ENCODE measurements at regions of chr5 and their contacts with region 1.

Region 1: DNA sequence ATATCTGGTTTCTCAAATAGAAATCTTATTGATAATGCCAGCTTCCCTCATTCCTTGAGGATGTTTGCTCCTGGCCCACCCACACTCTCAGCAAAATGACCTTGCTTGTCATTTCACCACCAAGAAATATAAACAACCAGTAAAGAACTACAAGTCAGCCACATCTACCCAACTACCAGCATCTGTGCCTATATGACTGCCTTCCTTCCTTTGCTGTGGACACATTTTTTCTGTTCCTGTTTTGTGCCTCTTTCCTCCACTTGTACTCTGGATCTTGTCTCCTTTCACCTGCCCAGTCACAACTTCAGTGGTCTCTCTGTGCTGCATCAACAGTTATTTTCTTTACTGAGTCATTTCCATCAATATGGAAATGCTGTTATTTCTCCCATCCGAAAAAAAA is 20.3 kb downstream of the KIF2A start:
- DNase-seq: no peak
- H3K4me3 ChIP-seq: no peak overlapping the region
- H3K4me3 Mint-ChIP-seq: peak overlapping the region in 4 of 8 donors; percentile 14 to 52 (median 42)
- H3K27ac ChIP-seq: no peak overlapping the region
- H3K27ac Mint-ChIP-seq: peak overlapping the region; percentile 31 to 81 (median 69)
- H3K4me1 ChIP-seq: peaks cover 57% of the 10 kb centered on the region
- H3K4me1 Mint-ChIP-seq: peaks cover 55 to 83% (median 70%) of the 10 kb centered on the region in 4 donors
- H3K27me3 ChIP-seq: no peaks in the 10 kb centered on the region
- H3K27me3 Mint-ChIP-seq: no peaks in the 10 kb centered on the region

Region 2: GRCh38 chr5:62059960-62060359 is 266.3 kb before region 1 on chr5:
- CTCF ChIA-PET with region 1: no interaction called
- POLR2A ChIA-PET with region 1: no interaction called
- intact Hi-C with region 1: no loop called
- DNase-seq: no peak
- H3K4me3 ChIP-seq: no peak overlapping the region
- H3K4me3 Mint-ChIP-seq: no peak overlapping the region
- H3K27ac ChIP-seq: no peak overlapping the region
- H3K27ac Mint-ChIP-seq: no peak overlapping the region
- H3K4me1 ChIP-seq: no peaks in the 10 kb centered on the region
- H3K4me1 Mint-ChIP-seq: no peaks in the 10 kb centered on the region
- H3K27me3 ChIP-seq: no peaks in the 10 kb centered on the region
- H3K27me3 Mint-ChIP-seq: peaks cover 0 to 5% of the 10 kb centered on the region in 2 donors

Region 3: GRCh38 chr5:62268234-62268633 is 58.1 kb before region 1 on chr5:
- CTCF ChIA-PET with region 1: no interaction called
- POLR2A ChIA-PET with region 1: no interaction called
- intact Hi-C with region 1: no loop called
- DNase-seq: no peak
- H3K4me3 ChIP-seq: no peak overlapping the region
- H3K4me3 Mint-ChIP-seq: peak overlapping the region in 2 of 8 donors; percentile 11 to 42
- H3K27ac ChIP-seq: no peak overlapping the region
- H3K27ac Mint-ChIP-seq: peak overlapping the region in 4 of 7 donors; percentile 5 to 84 (median 40)
- H3K4me1 ChIP-seq: peaks cover 11% of the 10 kb centered on the region
- H3K4me1 Mint-ChIP-seq: peaks cover 7 to 12% (median 10%) of the 10 kb centered on the region in 4 donors
- H3K27me3 ChIP-seq: no peaks in the 10 kb centered on the region
- H3K27me3 Mint-ChIP-seq: no peaks in the 10 kb centered on the region

Region 4: GRCh38 chr5:62315376-62316175 is 10.7 kb before region 1 on chr5:
- CTCF ChIA-PET with region 1: interaction called, 6 read pairs
- POLR2A ChIA-PET with region 1: no interaction called
- intact Hi-C with region 1: loop called (anchors 2 kb)
- DNase-seq: no peak
- H3K4me3 ChIP-seq: no peak overlapping the region
- H3K4me3 Mint-ChIP-seq: peak overlapping the region; percentile 2 to 62 (median 16)
- H3K27ac ChIP-seq: no peak overlapping the region
- H3K27ac Mint-ChIP-seq: peak overlapping the region; percentile 7 to 92 (median 31)
- H3K4me1 ChIP-seq: peaks cover 98% of the 10 kb centered on the region
- H3K4me1 Mint-ChIP-seq: peaks cover 65 to 94% (median 81%) of the 10 kb centered on the region in 4 donors
- H3K27me3 ChIP-seq: no peaks in the 10 kb centered on the region
- H3K27me3 Mint-ChIP-seq: no peaks in the 10 kb centered on the region

Region 5: DNA sequence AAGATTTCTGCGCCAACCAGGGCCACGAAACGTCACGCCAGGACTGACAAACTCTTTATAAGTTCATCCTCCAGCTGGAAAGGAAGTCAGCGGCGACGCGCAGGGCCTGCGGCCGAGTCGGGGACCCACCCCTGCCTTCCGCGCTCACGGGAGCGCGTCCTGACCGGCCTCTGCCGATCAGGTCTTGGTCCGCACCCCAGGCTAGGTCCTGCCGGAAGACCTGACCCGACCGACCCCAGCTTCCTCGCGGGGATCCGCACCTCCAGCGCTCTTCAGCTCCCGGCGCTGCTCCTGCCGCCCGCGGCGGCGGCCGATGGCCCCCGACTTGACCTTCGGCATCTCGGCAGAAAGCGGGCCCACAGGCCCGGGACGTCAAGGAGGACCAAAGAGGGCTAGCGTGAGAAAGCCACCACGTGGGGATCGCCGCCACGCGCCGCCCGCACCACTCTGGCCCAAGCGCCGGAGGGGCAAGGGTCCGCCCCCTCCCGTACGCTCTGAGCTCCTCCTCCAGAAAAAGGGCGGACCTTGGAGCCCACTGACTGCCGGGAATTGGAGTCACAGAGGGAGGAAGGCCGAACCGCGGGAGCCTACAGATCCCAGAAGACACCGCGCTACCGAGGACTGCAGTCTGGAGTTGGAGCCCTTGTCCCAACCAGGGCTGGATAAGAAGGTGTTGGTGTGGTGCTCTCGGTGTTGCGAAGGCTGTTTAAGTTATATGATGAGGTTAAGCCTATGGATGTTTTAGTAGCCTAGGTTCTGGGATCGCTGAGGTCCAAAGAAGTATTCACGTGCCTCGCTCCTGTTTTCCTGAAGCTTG is 77.3 kb after region 1 on chr5 and contains the start of gene DIMT1:
- CTCF ChIA-PET with region 1: no interaction called
- POLR2A ChIA-PET with region 1: no interaction called
- intact Hi-C with region 1: no loop called
- DNase-seq: peak; percentile 91 to 95 (median 91)
- H3K4me3 ChIP-seq: peak within 1 kb of the TSS; percentile 82 to 99
- H3K4me3 Mint-ChIP-seq: peak within 1 kb of the TSS; percentile 98 to 100 (median 99)
- H3K27ac ChIP-seq: peak within 1 kb of the TSS; percentile 94
- H3K27ac Mint-ChIP-seq: peak within 1 kb of the TSS; percentile 91 to 99 (median 97)
- H3K4me1 ChIP-seq: peaks cover 16% of the 10 kb centered on the region
- H3K4me1 Mint-ChIP-seq: peaks cover 19 to 32% (median 26%) of the 10 kb centered on the region in 4 donors
- H3K27me3 ChIP-seq: no peaks in the 10 kb centered on the region
- H3K27me3 Mint-ChIP-seq: no peaks in the 10 kb centered on the region
- total RNA-seq, gene DIMT1: 27.9 to 28.4 TPM